ENCODE measurements at regions of chr14 and their contacts with region 1.

Region 1: GRCh38 chr14:93132470-93133065 is 16.8 kb upstream of the ITPK1 start:
- DNase-seq: no peak
- ATAC-seq: peak; percentile 94
- H3K4me3 ChIP-seq: no peak overlapping the region
- H3K27ac ChIP-seq: no peak overlapping the region
- H3K4me1 ChIP-seq: no peaks in the 10 kb centered on the region
- H3K27me3 ChIP-seq: no peaks in the 10 kb centered on the region
- CTCF ChIP-seq: peak; percentile 51 to 64 (median 62)
- EP300 ChIP-seq: no peak
- POLR2A ChIP-seq: no peak
- RAD21 ChIP-seq: peak; percentile 58

Region 2: DNA sequence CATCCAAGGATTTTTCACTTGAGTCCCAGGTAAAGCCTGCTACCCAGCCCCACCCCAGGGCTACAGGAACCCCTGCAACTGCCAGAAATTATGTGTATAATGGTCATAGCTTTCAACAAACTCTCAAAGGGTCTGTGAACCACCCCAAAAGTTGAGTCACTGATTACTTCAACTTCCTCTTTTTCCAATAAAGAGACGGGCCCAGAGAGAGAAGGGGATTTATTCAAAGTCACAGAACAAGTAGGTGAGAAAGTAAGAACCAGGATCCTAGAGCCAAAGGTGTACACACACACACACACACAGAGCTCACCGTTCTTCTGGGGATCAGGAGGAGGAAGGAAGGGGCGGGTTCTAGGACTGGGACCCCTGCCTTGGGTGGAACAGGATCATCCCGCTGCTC is 12.1 kb before region 1 on chr14:
- CTCF ChIA-PET with region 1: interaction called, 287 read pairs
- POLR2A ChIA-PET with region 1: interaction called, 8 read pairs
- RAD21 ChIA-PET with region 1: interaction called, 163 read pairs
- SMC1A ChIA-PET with region 1: interaction called, 103 read pairs
- in situ Hi-C with region 1: no loop called
- intact Hi-C with region 1: no loop called
- DNase-seq: no peak
- ATAC-seq: peak; percentile 24
- H3K4me3 ChIP-seq: no peak overlapping the region
- H3K27ac ChIP-seq: no peak overlapping the region
- H3K4me1 ChIP-seq: no peaks in the 10 kb centered on the region
- H3K27me3 ChIP-seq: no peaks in the 10 kb centered on the region
- CTCF ChIP-seq: no peak
- EP300 ChIP-seq: no peak
- POLR2A ChIP-seq: no peak
- RAD21 ChIP-seq: no peak

Region 3: GRCh38 chr14:93481758-93482157 is 349.2 kb after region 1 on chr14:
- CTCF ChIA-PET with region 1: no interaction called
- POLR2A ChIA-PET with region 1: no interaction called
- RAD21 ChIA-PET with region 1: no interaction called
- SMC1A ChIA-PET with region 1: no interaction called
- in situ Hi-C with region 1: no loop called
- intact Hi-C with region 1: no loop called
- DNase-seq: no peak
- ATAC-seq: no peak
- H3K4me3 ChIP-seq: no peak overlapping the region
- H3K27ac ChIP-seq: no peak overlapping the region
- H3K4me1 ChIP-seq: no peaks in the 10 kb centered on the region
- H3K27me3 ChIP-seq: no peaks in the 10 kb centered on the region
- CTCF ChIP-seq: no peak
- EP300 ChIP-seq: no peak
- POLR2A ChIP-seq: no peak
- RAD21 ChIP-seq: no peak

Measured in GM12878 (cell line).